ENCODE measurements at regions of chr6 and their contacts with region 1.

Region 1: DNA sequence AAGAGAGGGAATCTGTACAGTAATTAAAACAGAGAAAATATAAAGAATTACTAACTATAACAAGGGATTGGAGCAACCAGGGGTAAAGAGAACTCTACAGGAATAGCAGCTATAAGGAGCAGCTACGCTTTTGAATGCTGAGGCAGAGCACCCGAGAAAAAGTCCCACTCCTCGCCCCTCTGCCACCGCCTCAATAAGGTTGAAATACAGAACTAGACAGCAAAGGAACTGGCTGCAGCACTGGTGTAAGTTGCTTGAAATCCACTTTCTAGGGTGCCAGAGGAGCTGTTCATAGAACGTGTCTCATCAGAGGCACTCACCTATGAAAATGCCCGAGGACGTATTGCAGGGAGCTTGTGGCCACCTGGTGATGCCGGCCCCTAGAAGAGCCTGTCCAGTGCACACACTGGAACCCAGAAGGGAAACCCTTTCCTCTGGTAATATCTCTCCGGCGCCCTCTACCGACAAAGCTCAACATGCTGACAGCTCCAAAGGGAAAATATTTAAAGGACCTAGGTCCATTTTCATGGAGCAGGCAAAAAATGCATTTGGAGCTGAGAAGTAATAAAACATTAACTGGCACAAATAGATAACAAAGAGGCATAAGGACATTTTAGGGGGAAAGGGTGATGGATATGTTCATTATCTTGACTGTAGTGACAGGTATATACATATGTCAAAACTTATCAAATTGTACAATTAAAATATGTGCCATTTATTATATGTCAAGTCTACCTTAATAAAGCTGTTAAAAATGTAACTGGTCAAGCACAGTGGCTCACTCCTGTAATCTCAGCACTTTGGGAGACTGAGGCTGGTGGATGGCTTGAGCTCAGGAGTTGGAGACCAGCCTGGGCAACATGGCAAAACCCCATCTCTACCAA is 137.4 kb upstream of the HDAC2 start:
- DNase-seq: peak; percentile 61
- ATAC-seq: no peak
- H3K4me3 Mint-ChIP-seq: no peak overlapping the region
- H3K27ac Mint-ChIP-seq: no peak overlapping the region
- H3K4me1 Mint-ChIP-seq: no peaks in the 10 kb centered on the region
- H3K27me3 Mint-ChIP-seq: peaks cover 11% of the 10 kb centered on the region

Region 2: DNA sequence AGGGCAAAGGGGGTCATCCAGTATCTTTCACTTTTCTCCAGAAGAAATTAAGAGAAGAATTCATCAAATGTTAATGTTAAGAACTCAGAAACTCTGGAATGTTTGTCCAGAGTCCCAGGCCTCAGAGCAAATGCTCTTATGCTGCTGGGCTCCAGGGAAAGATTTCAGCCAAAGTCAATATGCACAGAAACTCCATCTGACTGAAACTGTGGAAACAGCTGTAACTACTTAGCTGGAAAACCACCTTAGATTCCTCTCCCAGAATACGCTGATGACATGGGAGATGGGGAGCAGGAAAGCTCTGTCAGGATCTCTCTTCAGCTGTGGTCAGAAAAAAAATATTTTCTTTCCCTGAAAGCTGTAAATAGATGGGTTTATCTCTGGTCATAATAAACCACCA is 1201.6 kb before region 1 on chr6:
- CTCF ChIA-PET with region 1: no interaction called
- POLR2A ChIA-PET with region 1: no interaction called
- intact Hi-C with region 1: no loop called
- DNase-seq: no peak
- ATAC-seq: no peak
- H3K4me3 Mint-ChIP-seq: no peak overlapping the region
- H3K27ac Mint-ChIP-seq: no peak overlapping the region
- H3K4me1 Mint-ChIP-seq: no peaks in the 10 kb centered on the region
- H3K27me3 Mint-ChIP-seq: no peaks in the 10 kb centered on the region

Region 3: DNA sequence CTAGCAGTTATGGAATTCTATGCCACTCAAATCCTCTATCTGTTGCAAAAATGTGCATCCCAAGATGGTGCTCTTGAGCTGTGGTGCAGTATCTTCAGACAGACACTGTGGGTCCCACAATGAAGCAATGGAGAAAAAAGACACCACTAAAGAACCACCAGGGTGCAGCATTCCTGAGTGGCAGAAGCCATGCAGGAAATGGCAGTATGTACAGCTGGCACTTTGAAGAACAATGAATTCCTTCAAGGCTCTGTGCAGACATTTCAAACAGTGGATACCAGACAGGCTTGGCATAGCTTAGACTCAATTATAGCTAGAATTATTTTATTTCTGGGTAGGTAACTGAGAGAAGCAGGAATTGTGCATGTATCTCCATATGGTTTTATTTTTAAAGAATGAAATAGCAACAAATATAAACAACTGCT is 113.4 kb before region 1 on chr6:
- CTCF ChIA-PET with region 1: no interaction called
- POLR2A ChIA-PET with region 1: no interaction called
- intact Hi-C with region 1: loop called in 1 of 2 experiments (anchors 2 kb)
- DNase-seq: peak; percentile 18
- ATAC-seq: peak; percentile 51
- H3K4me3 Mint-ChIP-seq: no peak overlapping the region
- H3K27ac Mint-ChIP-seq: no peak overlapping the region
- H3K4me1 Mint-ChIP-seq: no peaks in the 10 kb centered on the region
- H3K27me3 Mint-ChIP-seq: peaks cover 12% of the 10 kb centered on the region

Region 4: DNA sequence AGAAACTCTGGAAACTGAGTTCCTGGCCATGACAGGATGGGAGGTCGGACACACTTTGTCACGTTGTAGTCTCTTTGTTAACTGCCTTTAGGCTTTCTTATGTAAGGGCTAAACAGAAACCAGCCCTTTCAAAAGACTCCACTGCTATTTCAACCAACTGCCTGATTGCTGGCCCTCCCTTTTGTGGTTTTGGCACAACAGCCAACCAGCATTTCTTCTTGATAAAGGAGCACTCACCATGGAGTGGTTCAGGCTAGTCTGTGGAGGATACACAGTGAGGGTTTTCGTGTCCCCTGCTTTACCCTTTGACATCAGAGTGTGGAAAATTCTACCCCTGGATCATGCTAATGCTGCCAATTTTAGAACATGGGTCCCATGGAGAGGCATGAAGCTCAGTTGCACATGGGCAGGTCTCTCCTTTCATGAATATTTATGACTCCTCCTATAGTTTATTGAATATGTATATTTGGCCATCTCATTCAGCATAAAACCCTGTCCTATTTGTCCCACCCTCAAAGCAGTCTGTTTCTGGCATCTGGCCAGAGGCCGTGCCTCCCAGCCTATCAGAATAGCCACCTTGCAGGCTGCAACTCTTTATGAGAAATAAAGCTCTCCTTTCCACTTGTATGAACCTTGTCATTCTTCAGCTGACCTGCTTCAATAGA is 86.1 kb after region 1 on chr6:
- CTCF ChIA-PET with region 1: no interaction called
- POLR2A ChIA-PET with region 1: no interaction called
- intact Hi-C with region 1: no loop called
- DNase-seq: no peak
- ATAC-seq: no peak
- H3K4me3 Mint-ChIP-seq: no peak overlapping the region
- H3K27ac Mint-ChIP-seq: no peak overlapping the region
- H3K4me1 Mint-ChIP-seq: no peaks in the 10 kb centered on the region
- H3K27me3 Mint-ChIP-seq: no peaks in the 10 kb centered on the region

Region 5: GRCh38 chr6:114432380-114432779 is 324.0 kb after region 1 on chr6:
- CTCF ChIA-PET with region 1: no interaction called
- POLR2A ChIA-PET with region 1: no interaction called
- intact Hi-C with region 1: no loop called
- DNase-seq: no peak
- ATAC-seq: no peak
- H3K4me3 Mint-ChIP-seq: no peak overlapping the region
- H3K27ac Mint-ChIP-seq: no peak overlapping the region
- H3K4me1 Mint-ChIP-seq: no peaks in the 10 kb centered on the region
- H3K27me3 Mint-ChIP-seq: peaks cover 2% of the 10 kb centered on the region